CD8-positive, alpha-beta T cell (primary cell): ENCODE measurements at regions of chr5 and their contacts with region 1.

Region 1: GRCh38 chr5:74648835-74649293 is 8.3 kb upstream of the ENC1 start:
- DNase-seq: peak in 5 of 9 experiments; percentile 28 to 77 (median 53)
- ATAC-seq: peak; percentile 74
- H3K4me3 ChIP-seq: no peak overlapping the region
- H3K4me3 Mint-ChIP-seq: no peak overlapping the region
- H3K27ac ChIP-seq: no peak overlapping the region
- H3K27ac Mint-ChIP-seq: no peak overlapping the region
- H3K4me1 ChIP-seq: no peaks in the 10 kb centered on the region
- H3K4me1 Mint-ChIP-seq: peaks cover 2% of the 10 kb centered on the region
- H3K27me3 ChIP-seq: no peaks in the 10 kb centered on the region
- H3K27me3 Mint-ChIP-seq: peaks cover 14% of the 10 kb centered on the region
- CTCF ChIP-seq: peak; percentile 67

Region 2: GRCh38 chr5:73591102-73591695 is 1057.7 kb before region 1 on chr5:
- CTCF ChIA-PET with region 1: interaction called, 4 read pairs
- POLR2A ChIA-PET with region 1: no interaction called
- intact Hi-C with region 1: loop called in 1 of 2 experiments (anchors 2 kb)
- DNase-seq: peak in 6 of 9 experiments; percentile 16 to 81 (median 46)
- ATAC-seq: peak; percentile 62
- H3K4me3 ChIP-seq: no peak overlapping the region
- H3K4me3 Mint-ChIP-seq: no peak overlapping the region
- H3K27ac ChIP-seq: no peak overlapping the region
- H3K27ac Mint-ChIP-seq: no peak overlapping the region
- H3K4me1 ChIP-seq: no peaks in the 10 kb centered on the region
- H3K4me1 Mint-ChIP-seq: no peaks in the 10 kb centered on the region
- H3K27me3 ChIP-seq: no peaks in the 10 kb centered on the region
- H3K27me3 Mint-ChIP-seq: no peaks in the 10 kb centered on the region
- CTCF ChIP-seq: peak; percentile 84

Region 3: GRCh38 chr5:74631081-74631953 is 17.5 kb before region 1 on chr5:
- CTCF ChIA-PET with region 1: interaction called, 10 read pairs
- POLR2A ChIA-PET with region 1: no interaction called
- intact Hi-C with region 1: no loop called
- DNase-seq: peak in 6 of 9 experiments; percentile 17 to 84 (median 42)
- ATAC-seq: peak; percentile 61
- H3K4me3 ChIP-seq: no peak overlapping the region
- H3K4me3 Mint-ChIP-seq: peak overlapping the region; percentile 61
- H3K27ac ChIP-seq: peak overlapping the region; percentile 36 to 82
- H3K27ac Mint-ChIP-seq: peak overlapping the region; percentile 87
- H3K4me1 ChIP-seq: peaks cover 28% of the 10 kb centered on the region
- H3K4me1 Mint-ChIP-seq: peaks cover 24% of the 10 kb centered on the region
- H3K27me3 ChIP-seq: no peaks in the 10 kb centered on the region
- H3K27me3 Mint-ChIP-seq: peaks cover 7% of the 10 kb centered on the region
- CTCF ChIP-seq: no peak

Region 4: GRCh38 chr5:74717596-74717995 is 68.7 kb after region 1 on chr5:
- CTCF ChIA-PET with region 1: no interaction called
- POLR2A ChIA-PET with region 1: no interaction called
- intact Hi-C with region 1: no loop called
- DNase-seq: no peak
- ATAC-seq: no peak
- H3K4me3 ChIP-seq: no peak overlapping the region
- H3K4me3 Mint-ChIP-seq: no peak overlapping the region
- H3K27ac ChIP-seq: no peak overlapping the region
- H3K27ac Mint-ChIP-seq: no peak overlapping the region
- H3K4me1 ChIP-seq: no peaks in the 10 kb centered on the region
- H3K4me1 Mint-ChIP-seq: no peaks in the 10 kb centered on the region
- H3K27me3 ChIP-seq: no peaks in the 10 kb centered on the region
- H3K27me3 Mint-ChIP-seq: no peaks in the 10 kb centered on the region
- CTCF ChIP-seq: no peak